Naive thymus-derived CD4-positive, alpha-beta T cell (primary cell): ENCODE measurements at regions of chr2 and their contacts with region 1.

Region 1: DNA sequence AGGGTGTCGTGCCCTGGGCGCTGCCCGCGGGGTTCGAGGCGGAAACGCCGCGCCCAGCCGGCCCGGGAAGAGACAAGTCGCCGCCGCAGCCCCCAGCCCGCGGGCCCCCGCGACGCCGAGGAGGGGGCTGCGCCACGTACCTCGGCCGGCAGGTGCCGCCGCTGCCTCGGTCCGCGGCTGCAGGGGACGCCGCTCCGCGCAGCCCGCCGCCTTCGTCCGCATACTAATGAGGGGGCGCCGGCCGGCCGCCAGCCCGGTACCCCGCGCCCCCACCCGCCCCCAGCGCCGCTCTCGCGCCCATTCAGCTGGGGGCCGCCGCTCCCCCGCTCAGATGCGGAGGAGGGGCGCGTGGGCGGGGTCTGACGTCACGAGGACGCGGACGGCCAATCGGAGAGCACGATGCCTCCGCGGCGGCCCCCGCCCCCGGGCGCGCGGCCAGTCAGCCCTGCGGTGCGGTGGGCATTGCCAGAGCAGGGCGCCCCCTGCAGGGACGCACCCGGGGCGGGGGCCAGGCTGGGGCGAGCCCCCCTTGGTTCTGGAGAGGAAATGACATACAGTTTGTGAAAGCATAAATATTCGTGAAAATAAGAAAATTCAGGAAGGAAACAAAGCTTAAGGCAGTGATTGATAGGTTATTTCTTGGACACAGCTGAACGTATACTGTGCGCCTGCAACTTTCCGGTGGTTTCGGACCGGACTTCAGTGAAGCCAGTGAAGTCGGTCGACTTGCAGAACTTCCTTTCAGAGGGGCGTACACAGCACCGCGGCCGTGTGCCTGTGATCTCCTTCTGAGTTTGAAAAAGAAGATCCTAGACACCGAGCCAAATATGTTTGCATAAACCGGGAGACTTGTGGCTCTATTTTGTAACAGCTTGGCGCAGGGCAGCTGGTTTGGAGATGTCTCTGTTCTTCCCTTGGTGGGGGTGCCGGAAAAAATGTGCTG is at the start of gene ST3GAL5:
- DNase-seq: peak; percentile 89 to 96 (median 93)
- ATAC-seq: peak; percentile 95
- H3K4me3 ChIP-seq: peak within 1 kb of the TSS; percentile 77
- H3K4me3 Mint-ChIP-seq: peak within 1 kb of the TSS; percentile 88 to 100 (median 96)
- H3K27ac ChIP-seq: peak within 1 kb of the TSS; percentile 93
- H3K27ac Mint-ChIP-seq: peak within 1 kb of the TSS; percentile 89 to 99 (median 98)
- H3K4me1 ChIP-seq: peaks cover 24 to 47% of the 10 kb centered on the region in 2 donors
- H3K4me1 Mint-ChIP-seq: peaks cover 48 to 77% (median 72%) of the 10 kb centered on the region in 7 donors
- H3K27me3 ChIP-seq: no peaks in the 10 kb centered on the region
- H3K27me3 Mint-ChIP-seq: no peaks in the 10 kb centered on the region
- total RNA-seq, gene ST3GAL5: 37.9 to 53.6 (median 43.0) TPM

Region 2: DNA sequence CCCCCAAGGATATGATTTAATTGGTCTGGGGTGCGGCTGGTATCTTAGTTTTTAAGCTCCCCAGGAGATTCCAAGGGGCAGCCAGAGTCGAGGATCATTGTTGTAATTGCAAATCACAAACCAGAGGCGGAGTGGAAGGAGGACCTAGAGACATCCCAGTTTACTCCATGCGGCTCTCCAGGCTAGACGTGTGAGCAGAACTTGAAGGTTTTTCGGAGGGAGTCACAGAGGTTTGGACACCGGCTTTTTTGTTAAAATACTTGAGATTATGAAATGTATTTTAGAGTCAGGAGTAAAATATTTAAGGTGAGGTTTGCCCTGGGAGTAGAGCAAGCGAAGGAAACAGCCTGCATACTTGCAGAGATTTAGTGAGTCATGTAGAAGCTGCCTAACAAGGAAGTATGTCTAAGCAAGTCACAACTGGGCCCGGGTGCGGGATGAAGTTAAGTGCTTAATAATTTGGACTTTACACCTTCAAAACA is 600.7 kb before region 1 on chr2:
- CTCF ChIA-PET with region 1: no interaction called
- POLR2A ChIA-PET with region 1: no interaction called
- intact Hi-C with region 1: no loop called
- DNase-seq: no peak
- ATAC-seq: no peak
- H3K4me3 ChIP-seq: no peak overlapping the region
- H3K4me3 Mint-ChIP-seq: no peak overlapping the region
- H3K27ac ChIP-seq: no peak overlapping the region
- H3K27ac Mint-ChIP-seq: no peak overlapping the region
- H3K4me1 ChIP-seq: peaks cover 5 to 9% of the 10 kb centered on the region in 2 donors
- H3K4me1 Mint-ChIP-seq: peaks cover 14 to 31% (median 25%) of the 10 kb centered on the region in 7 donors
- H3K27me3 ChIP-seq: no peaks in the 10 kb centered on the region
- H3K27me3 Mint-ChIP-seq: no peaks in the 10 kb centered on the region

Region 3: GRCh38 chr2:85619617-85620016 is 269.3 kb before region 1 on chr2:
- CTCF ChIA-PET with region 1: no interaction called
- POLR2A ChIA-PET with region 1: no interaction called
- intact Hi-C with region 1: loop called in 1 of 2 experiments (anchors 5 kb)
- DNase-seq: no peak
- ATAC-seq: no peak
- H3K4me3 ChIP-seq: no peak overlapping the region
- H3K4me3 Mint-ChIP-seq: no peak overlapping the region
- H3K27ac ChIP-seq: no peak overlapping the region
- H3K27ac Mint-ChIP-seq: no peak overlapping the region
- H3K4me1 ChIP-seq: peaks cover 12 to 15% of the 10 kb centered on the region in 2 donors
- H3K4me1 Mint-ChIP-seq: peaks cover 11 to 38% (median 32%) of the 10 kb centered on the region in 7 donors
- H3K27me3 ChIP-seq: no peaks in the 10 kb centered on the region
- H3K27me3 Mint-ChIP-seq: no peaks in the 10 kb centered on the region

Region 4: GRCh38 chr2:85852937-85853498 is 35.9 kb before region 1 on chr2:
- CTCF ChIA-PET with region 1: interaction called, 29 read pairs
- POLR2A ChIA-PET with region 1: interaction called, 92 read pairs
- intact Hi-C with region 1: loop called (anchors 1 kb)
- DNase-seq: peak; percentile 35 to 77 (median 63)
- ATAC-seq: peak; percentile 92
- H3K4me3 ChIP-seq: peak overlapping the region; percentile 36
- H3K4me3 Mint-ChIP-seq: peak overlapping the region; percentile 80 to 94 (median 86)
- H3K27ac ChIP-seq: peak overlapping the region; percentile 91
- H3K27ac Mint-ChIP-seq: peak overlapping the region; percentile 98 to 100 (median 100)
- H3K4me1 ChIP-seq: peaks cover 54% of the 10 kb centered on the region in 2 donors
- H3K4me1 Mint-ChIP-seq: peaks cover 48 to 84% (median 68%) of the 10 kb centered on the region in 7 donors
- H3K27me3 ChIP-seq: no peaks in the 10 kb centered on the region
- H3K27me3 Mint-ChIP-seq: no peaks in the 10 kb centered on the region

Region 5: GRCh38 chr2:85878719-85879385 is 10.1 kb before region 1 on chr2:
- CTCF ChIA-PET with region 1: interaction called, 11 read pairs
- POLR2A ChIA-PET with region 1: interaction called, 16 read pairs
- intact Hi-C with region 1: loop called in 1 of 2 experiments (anchors 1 kb)
- DNase-seq: no peak
- ATAC-seq: no peak
- H3K4me3 ChIP-seq: no peak overlapping the region
- H3K4me3 Mint-ChIP-seq: peak overlapping the region; percentile 18 to 73 (median 50)
- H3K27ac ChIP-seq: no peak overlapping the region
- H3K27ac Mint-ChIP-seq: peak overlapping the region; percentile 2 to 87 (median 41)
- H3K4me1 ChIP-seq: peaks cover 0 to 31% of the 10 kb centered on the region in 2 donors
- H3K4me1 Mint-ChIP-seq: peaks cover 54 to 88% (median 78%) of the 10 kb centered on the region in 7 donors
- H3K27me3 ChIP-seq: no peaks in the 10 kb centered on the region
- H3K27me3 Mint-ChIP-seq: no peaks in the 10 kb centered on the region

Region 6: GRCh38 chr2:85935746-85936208 is 46.8 kb after region 1 on chr2:
- CTCF ChIA-PET with region 1: interaction called, 4 read pairs
- POLR2A ChIA-PET with region 1: no interaction called
- intact Hi-C with region 1: loop called in 1 of 2 experiments (anchors 2 kb)
- DNase-seq: no peak
- ATAC-seq: no peak
- H3K4me3 ChIP-seq: no peak overlapping the region
- H3K4me3 Mint-ChIP-seq: no peak overlapping the region
- H3K27ac ChIP-seq: no peak overlapping the region
- H3K27ac Mint-ChIP-seq: no peak overlapping the region
- H3K4me1 ChIP-seq: peaks cover 0 to 11% of the 10 kb centered on the region in 2 donors
- H3K4me1 Mint-ChIP-seq: peaks cover 6 to 30% (median 27%) of the 10 kb centered on the region in 7 donors
- H3K27me3 ChIP-seq: no peaks in the 10 kb centered on the region
- H3K27me3 Mint-ChIP-seq: peaks cover 0 to 10% (median 0%) of the 10 kb centered on the region in 5 donors

Region 7: GRCh38 chr2:86035883-86036668 is 147.1 kb after region 1 on chr2:
- CTCF ChIA-PET with region 1: interaction called, 101 read pairs
- POLR2A ChIA-PET with region 1: interaction called, 81 read pairs
- intact Hi-C with region 1: loop called (anchors 1 kb)
- DNase-seq: peak in 8 of 9 donors; percentile 63 to 89 (median 84)
- ATAC-seq: peak; percentile 65
- H3K4me3 ChIP-seq: peak overlapping the region; percentile 48
- H3K4me3 Mint-ChIP-seq: peak overlapping the region; percentile 80 to 88 (median 86)
- H3K27ac ChIP-seq: peak overlapping the region; percentile 88
- H3K27ac Mint-ChIP-seq: peak overlapping the region; percentile 94 to 100 (median 100)
- H3K4me1 ChIP-seq: peaks cover 55 to 84% of the 10 kb centered on the region in 2 donors
- H3K4me1 Mint-ChIP-seq: peaks cover 57 to 92% (median 88%) of the 10 kb centered on the region in 7 donors
- H3K27me3 ChIP-seq: no peaks in the 10 kb centered on the region
- H3K27me3 Mint-ChIP-seq: peaks cover 0 to 5% (median 0%) of the 10 kb centered on the region in 5 donors

Region 8: DNA sequence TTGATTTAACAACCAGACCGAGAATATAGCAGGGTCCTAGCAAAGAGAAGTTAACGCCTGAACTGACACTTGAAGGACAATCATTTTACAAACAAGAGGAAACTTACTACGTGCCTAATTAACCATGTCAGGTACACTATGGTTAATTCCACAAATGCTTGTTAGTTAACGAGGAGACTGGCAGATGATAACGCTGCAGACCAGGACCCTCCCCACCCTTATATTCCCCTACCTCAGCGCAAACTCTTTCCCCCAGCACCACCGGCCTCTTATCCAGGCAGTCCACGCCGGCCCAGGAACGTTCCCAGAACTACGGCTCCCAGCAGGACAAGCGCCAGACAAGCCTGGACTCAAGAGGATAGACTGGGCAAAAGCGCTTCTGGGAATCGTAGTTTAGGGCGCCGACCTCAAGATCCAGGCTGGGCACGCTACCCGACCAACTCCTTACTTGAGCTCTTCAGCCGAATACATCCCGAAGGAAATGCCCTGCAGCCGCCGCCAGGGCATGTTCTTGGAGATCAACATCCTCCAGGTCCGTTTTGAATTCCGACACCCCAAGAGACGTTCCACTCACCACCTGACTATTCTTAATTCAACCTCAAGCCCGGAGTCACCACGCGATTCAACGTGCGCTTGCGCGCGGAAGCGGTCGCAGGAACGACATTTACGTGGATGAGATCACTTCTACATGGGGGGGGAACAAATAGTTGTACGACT is 216.5 kb after region 1 on chr2 and contains the start of gene POLR1A:
- CTCF ChIA-PET with region 1: interaction called, 5 read pairs
- POLR2A ChIA-PET with region 1: interaction called, 6 read pairs
- intact Hi-C with region 1: loop called (anchors 1 kb)
- DNase-seq: peak; percentile 61 to 91 (median 89)
- ATAC-seq: peak; percentile 86
- H3K4me3 ChIP-seq: peak within 1 kb of the TSS; percentile 95
- H3K4me3 Mint-ChIP-seq: peak within 1 kb of the TSS; percentile 90 to 97 (median 92)
- H3K27ac ChIP-seq: peak within 1 kb of the TSS; percentile 86
- H3K27ac Mint-ChIP-seq: peak within 1 kb of the TSS; percentile 95 to 100 (median 99)
- H3K4me1 ChIP-seq: peaks cover 20 to 28% of the 10 kb centered on the region in 2 donors
- H3K4me1 Mint-ChIP-seq: peaks cover 37 to 86% (median 76%) of the 10 kb centered on the region in 7 donors
- H3K27me3 ChIP-seq: no peaks in the 10 kb centered on the region
- H3K27me3 Mint-ChIP-seq: no peaks in the 10 kb centered on the region
- total RNA-seq, gene POLR1A: 18.8 to 44.4 (median 21.7) TPM